ENCODE measurements at regions of chr20 and their contacts with region 1.

Region 1: GRCh38 chr20:19757487-19758132 is 448 bp upstream of the RIN2 start:
- DNase-seq: peak; percentile 97
- H3K4me3 ChIP-seq: peak overlapping the region; percentile 81
- H3K4me3 Mint-ChIP-seq: peak overlapping the region; percentile 97
- H3K27ac Mint-ChIP-seq: peak overlapping the region; percentile 96
- H3K4me1 ChIP-seq: peaks cover 5% of the 10 kb centered on the region; the same call in 1 of the 2 replicates
- H3K4me1 Mint-ChIP-seq: peaks cover 54% of the 10 kb centered on the region
- H3K27me3 ChIP-seq: no peaks in the 10 kb centered on the region
- H3K27me3 Mint-ChIP-seq: no peaks in the 10 kb centered on the region
- CTCF ChIP-seq: no peak

Region 2: DNA sequence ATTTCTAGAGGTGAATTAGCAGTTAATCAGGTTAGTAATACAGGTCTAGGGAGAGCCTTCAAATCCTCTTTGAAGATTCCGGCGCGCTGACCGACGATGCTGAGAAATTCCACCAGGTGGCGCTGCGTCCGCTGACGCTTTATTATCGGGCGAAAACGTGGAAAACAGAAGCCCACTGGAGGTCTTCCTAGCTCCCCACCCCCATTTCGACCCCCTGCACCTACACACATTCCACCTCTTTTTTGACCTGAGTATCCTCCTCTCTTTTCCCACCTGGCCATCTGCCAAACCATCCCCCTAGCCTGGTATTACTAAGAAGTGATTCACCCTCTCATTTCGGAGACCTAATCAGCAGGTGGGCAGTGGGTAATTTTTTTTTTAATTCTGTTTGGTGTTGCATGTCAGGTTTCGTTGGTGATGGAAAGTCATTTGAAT is 64.9 kb before region 1 on chr20:
- CTCF ChIA-PET with region 1: interaction called, 4 read pairs
- POLR2A ChIA-PET with region 1: no interaction called
- intact Hi-C with region 1: loop called (anchors 1 kb)
- DNase-seq: peak; percentile 55 to 73
- H3K4me3 ChIP-seq: no peak overlapping the region
- H3K4me3 Mint-ChIP-seq: peak overlapping the region; percentile 27
- H3K27ac Mint-ChIP-seq: no peak overlapping the region
- H3K4me1 ChIP-seq: 0 out of 2 replicates have a peak, but pooled peaks cover 8% of the 10 kb centered on the region
- H3K4me1 Mint-ChIP-seq: peaks cover 15% of the 10 kb centered on the region
- H3K27me3 ChIP-seq: no peaks in the 10 kb centered on the region
- H3K27me3 Mint-ChIP-seq: no peaks in the 10 kb centered on the region
- CTCF ChIP-seq: peak; percentile 90

Region 3: DNA sequence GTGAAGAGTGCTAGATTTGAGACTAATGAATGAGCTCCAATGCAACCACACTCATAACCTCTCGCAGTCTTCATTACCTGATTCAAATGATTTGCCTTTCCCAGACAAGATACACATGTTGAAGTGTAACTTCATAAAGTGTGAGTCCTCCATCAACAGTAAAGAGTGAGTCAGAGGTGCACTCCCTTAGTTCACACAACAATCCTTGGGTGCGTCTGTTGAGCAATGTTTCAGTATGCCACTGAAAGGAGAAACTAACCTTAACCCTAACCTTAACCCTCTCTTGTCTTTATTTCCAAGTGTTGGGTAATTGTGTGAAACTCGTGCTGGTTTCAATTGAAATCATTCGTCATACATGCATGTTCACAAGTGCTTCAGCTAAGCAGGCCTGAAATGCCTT is 20.6 kb before region 1 on chr20:
- CTCF ChIA-PET with region 1: no interaction called
- POLR2A ChIA-PET with region 1: interaction called, 7 read pairs
- intact Hi-C with region 1: loop called (anchors 2 kb)
- DNase-seq: peak in 1 of 2 experiments; percentile 55
- H3K4me3 ChIP-seq: no peak overlapping the region
- H3K4me3 Mint-ChIP-seq: no peak overlapping the region
- H3K27ac Mint-ChIP-seq: peak overlapping the region; percentile 50
- H3K4me1 ChIP-seq: peaks cover 10% of the 10 kb centered on the region
- H3K4me1 Mint-ChIP-seq: peaks cover 16% of the 10 kb centered on the region
- H3K27me3 ChIP-seq: no peaks in the 10 kb centered on the region
- H3K27me3 Mint-ChIP-seq: no peaks in the 10 kb centered on the region
- CTCF ChIP-seq: no peak

Region 4: DNA sequence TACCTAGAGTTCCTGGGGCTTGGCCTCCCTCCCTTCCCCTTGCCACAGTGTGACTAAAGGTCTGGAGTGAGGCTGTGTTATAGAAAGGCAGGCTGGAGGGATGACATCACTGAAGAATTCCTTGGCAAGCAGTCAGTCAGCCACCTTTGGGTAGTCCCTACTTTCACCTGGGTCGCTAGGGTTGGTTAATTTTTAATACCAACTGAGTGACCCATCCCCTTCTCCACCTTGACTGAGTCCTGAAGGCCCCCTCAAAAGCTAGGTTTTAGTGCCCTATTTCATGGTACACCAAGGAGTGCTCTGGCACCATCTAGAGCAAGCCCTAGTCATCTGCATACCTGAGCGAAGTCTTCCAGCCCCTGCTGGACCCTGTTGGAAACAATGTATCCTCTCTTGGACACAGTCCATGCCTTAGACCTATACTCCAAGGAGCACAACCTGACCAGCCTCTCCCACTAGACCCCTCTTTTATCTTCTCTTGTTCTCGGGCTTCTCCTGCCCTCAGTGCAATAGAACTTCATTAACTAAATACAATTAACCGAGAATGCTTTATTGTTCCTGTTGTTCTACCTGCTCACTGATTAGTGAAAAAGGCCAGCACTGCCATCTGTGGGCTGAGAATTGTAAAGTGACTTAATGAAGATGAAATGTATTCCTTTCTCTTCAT is 45.0 kb after region 1 on chr20:
- CTCF ChIA-PET with region 1: interaction called, 6 read pairs
- POLR2A ChIA-PET with region 1: interaction called, 8 read pairs
- intact Hi-C with region 1: loop called (anchors 1 kb)
- DNase-seq: peak; percentile 78 to 82
- H3K4me3 ChIP-seq: no peak overlapping the region
- H3K4me3 Mint-ChIP-seq: no peak overlapping the region
- H3K27ac Mint-ChIP-seq: peak overlapping the region; percentile 14
- H3K4me1 ChIP-seq: peaks cover 27% of the 10 kb centered on the region
- H3K4me1 Mint-ChIP-seq: peaks cover 25% of the 10 kb centered on the region
- H3K27me3 ChIP-seq: no peaks in the 10 kb centered on the region
- H3K27me3 Mint-ChIP-seq: no peaks in the 10 kb centered on the region
- CTCF ChIP-seq: peak; percentile 80 to 90

Region 5: DNA sequence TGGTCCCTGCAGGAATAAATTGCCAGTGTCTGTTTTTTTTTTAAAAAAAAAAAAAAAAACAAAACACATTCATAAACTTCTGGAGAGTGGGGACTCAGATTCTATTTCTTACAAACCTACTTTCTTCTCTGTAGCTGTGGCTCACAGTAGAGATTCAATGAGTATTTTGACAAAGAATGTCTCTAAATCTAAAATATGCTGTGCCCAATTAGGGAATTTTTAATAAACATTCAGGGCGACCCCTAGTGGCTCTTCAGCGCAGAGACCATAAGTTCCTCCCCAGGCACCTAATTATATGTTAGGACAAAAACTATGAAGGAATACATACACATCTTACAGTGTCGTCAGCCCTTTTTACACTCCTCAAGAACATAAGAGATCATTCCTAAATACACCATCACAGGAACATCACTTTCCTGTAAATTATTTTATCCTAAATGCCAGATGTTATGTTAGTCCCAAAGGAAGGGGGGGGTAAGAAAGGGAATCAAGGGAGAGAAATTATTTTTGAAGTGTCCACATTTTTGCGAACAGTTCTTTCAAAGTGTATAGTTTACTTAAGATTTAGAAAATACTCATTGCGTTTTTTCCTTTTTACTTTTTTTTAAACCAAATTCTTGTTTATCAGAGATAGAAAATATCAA is 237.7 kb after region 1 on chr20:
- CTCF ChIA-PET with region 1: interaction called, 5 read pairs
- POLR2A ChIA-PET with region 1: no interaction called
- intact Hi-C with region 1: loop called (anchors 1 kb)
- DNase-seq: peak in 1 of 2 experiments; percentile 37
- H3K4me3 ChIP-seq: no peak overlapping the region
- H3K4me3 Mint-ChIP-seq: no peak overlapping the region
- H3K27ac Mint-ChIP-seq: peak overlapping the region; percentile 81
- H3K4me1 ChIP-seq: peaks cover 44% of the 10 kb centered on the region
- H3K4me1 Mint-ChIP-seq: peaks cover 32% of the 10 kb centered on the region
- H3K27me3 ChIP-seq: no peaks in the 10 kb centered on the region
- H3K27me3 Mint-ChIP-seq: no peaks in the 10 kb centered on the region
- CTCF ChIP-seq: peak; percentile 79 to 86